ENCODE measurements at regions of chr19 and their contacts with region 1.

Region 1: DNA sequence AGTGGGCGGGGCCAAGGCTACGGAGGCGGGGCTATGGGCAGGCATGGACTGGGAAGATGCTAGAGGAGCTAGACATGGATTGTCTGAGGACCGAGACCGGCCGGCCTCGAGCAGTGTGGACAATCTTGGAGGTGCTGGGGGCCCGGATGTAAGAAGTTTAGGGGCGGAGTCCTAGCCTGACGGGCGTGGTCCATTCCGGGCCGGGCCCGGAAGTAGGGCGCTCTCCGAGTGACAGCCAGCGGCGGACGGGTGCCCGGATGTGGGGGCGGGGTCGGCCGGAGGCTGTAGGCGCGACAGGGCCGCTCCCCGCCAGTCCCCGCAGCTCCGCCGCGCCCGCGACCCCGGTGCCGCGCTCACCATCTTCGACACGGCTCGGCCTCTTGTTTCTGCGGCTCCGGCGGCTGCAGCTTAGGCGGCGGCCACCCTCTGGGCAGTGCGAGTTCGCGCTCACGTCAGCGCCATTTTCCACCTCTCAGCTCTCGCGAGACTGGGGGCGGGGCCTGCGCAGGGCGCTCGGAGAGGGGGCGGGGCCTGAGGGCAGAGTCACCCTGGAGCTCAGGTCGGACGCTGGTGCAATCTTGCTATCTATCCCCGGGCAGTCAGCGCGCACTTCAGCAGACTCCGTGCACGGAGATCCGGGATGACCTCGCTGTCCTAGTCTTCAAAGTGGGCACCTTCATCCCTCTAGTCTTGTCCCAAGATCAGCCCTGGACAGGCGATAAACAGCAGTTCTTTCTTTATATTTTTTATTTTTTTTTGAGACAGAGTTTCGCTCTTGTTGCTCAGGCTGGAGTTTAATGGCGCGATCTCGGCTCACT is at the start of gene ZNF414:
- DNase-seq: peak; percentile 94 to 98 (median 97)
- H3K4me3 ChIP-seq: peak within 1 kb of the TSS; percentile 68
- H3K4me3 Mint-ChIP-seq: peak within 1 kb of the TSS; percentile 89 to 97 (median 93)
- H3K27ac ChIP-seq: peak within 1 kb of the TSS; percentile 83
- H3K27ac Mint-ChIP-seq: peak within 1 kb of the TSS; percentile 94 to 99 (median 98)
- H3K4me1 ChIP-seq: peaks cover 64% of the 10 kb centered on the region
- H3K4me1 Mint-ChIP-seq: peaks cover 46 to 62% (median 52%) of the 10 kb centered on the region in 3 donors
- H3K27me3 ChIP-seq: no peaks in the 10 kb centered on the region
- H3K27me3 Mint-ChIP-seq: peaks cover 0 to 4% of the 10 kb centered on the region in 2 donors
- total RNA-seq, gene ZNF414: 25.7 to 26.0 TPM

Region 2: DNA sequence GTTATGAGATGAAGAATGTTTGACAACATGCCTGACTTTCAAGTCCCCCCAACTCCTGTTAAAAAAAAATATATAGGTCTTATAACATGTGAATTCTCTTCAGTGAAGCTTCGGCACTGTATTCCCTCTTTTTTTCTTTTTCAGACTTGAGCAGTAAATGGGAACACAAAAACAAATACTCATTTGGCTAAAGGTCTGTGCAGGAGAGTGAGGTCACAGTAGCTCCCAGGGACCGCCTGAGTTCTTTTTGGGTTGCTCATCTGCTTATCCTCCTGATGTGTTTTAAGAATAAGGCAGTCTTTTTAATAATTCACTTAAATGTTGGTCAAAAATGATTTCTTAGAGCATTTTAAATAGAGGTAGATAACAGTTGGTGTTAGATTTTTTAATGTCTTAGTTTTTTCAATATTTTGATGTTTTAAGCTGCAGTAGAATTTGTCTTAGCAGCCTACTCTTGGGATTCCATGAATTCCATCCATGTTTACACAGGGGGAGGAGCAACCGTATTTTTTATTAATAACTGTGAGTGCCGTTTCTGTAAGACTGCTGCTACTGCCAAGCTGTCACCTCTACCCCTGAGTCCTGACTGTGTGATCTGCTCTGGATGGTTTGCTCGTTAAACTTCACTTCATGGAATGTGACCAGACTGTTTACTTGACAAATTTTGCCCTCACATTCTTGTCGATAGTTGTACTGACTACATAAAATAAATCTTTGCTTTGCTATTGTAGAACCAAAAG is 54.2 kb before region 1 on chr19:
- CTCF ChIA-PET with region 1: no interaction called
- POLR2A ChIA-PET with region 1: no interaction called
- DNase-seq: no peak
- H3K4me3 ChIP-seq: no peak overlapping the region
- H3K4me3 Mint-ChIP-seq: peak overlapping the region in 5 of 7 donors; percentile 13 to 46 (median 40)
- H3K27ac ChIP-seq: no peak overlapping the region
- H3K27ac Mint-ChIP-seq: peak overlapping the region in 7 of 8 donors; percentile 11 to 83 (median 66)
- H3K4me1 ChIP-seq: peaks cover 37% of the 10 kb centered on the region
- H3K4me1 Mint-ChIP-seq: peaks cover 76 to 93% (median 90%) of the 10 kb centered on the region in 3 donors
- H3K27me3 ChIP-seq: no peaks in the 10 kb centered on the region
- H3K27me3 Mint-ChIP-seq: no peaks in the 10 kb centered on the region

Region 3: DNA sequence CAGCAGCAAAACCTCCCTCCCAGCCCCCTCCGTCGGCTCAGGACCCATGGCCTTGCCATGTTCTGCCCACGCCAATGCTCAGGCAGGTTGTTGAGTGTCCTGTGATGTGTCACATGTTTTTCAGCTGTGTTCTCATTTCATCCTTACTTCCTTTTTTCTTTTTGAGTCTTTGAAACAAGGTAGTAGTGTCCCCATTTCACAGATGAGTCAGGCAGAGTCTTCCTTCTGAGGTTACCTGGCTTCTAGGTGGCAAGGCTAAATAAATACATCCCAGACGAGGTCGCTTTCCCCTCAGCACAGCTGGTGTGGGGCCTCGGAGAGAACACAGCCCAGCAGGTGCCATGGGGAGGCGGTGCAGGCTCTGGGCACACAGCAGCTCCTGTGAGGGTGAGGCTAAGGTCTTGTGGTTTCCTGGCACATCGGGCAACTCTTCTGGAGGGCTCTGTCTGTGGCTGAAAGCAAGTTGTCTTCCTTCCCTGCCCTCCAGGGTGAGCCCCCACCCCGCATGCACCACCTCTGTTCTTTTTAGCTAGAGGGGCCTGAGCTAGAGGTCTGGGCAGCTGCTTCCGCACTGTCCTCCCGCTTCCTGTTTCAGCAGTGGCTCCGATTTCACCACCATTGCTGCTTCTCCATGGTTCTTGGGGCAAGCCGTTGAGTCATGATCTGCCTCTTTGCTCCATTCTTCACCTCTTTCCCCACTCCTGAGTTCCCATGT is 26.6 kb before region 1 on chr19:
- CTCF ChIA-PET with region 1: interaction called, 6 read pairs
- POLR2A ChIA-PET with region 1: interaction called, 10 read pairs
- DNase-seq: peak; percentile 35 to 71 (median 64)
- H3K4me3 ChIP-seq: no peak overlapping the region
- H3K4me3 Mint-ChIP-seq: peak overlapping the region; percentile 32 to 86 (median 66)
- H3K27ac ChIP-seq: no peak overlapping the region
- H3K27ac Mint-ChIP-seq: peak overlapping the region; percentile 78 to 97 (median 90)
- H3K4me1 ChIP-seq: peaks cover 25% of the 10 kb centered on the region
- H3K4me1 Mint-ChIP-seq: peaks cover 25 to 43% (median 35%) of the 10 kb centered on the region in 3 donors
- H3K27me3 ChIP-seq: no peaks in the 10 kb centered on the region
- H3K27me3 Mint-ChIP-seq: no peaks in the 10 kb centered on the region

Region 4: GRCh38 chr19:8569066-8569771 is 55.3 kb after region 1 on chr19:
- CTCF ChIA-PET with region 1: interaction called, 120 read pairs
- POLR2A ChIA-PET with region 1: interaction called, 15 read pairs
- DNase-seq: peak; percentile 44 to 92 (median 74)
- H3K4me3 ChIP-seq: peak overlapping the region; percentile 59
- H3K4me3 Mint-ChIP-seq: peak overlapping the region; percentile 77 to 100 (median 97)
- H3K27ac ChIP-seq: peak overlapping the region; percentile 63
- H3K27ac Mint-ChIP-seq: peak overlapping the region; percentile 74 to 99 (median 94)
- H3K4me1 ChIP-seq: peaks cover 81% of the 10 kb centered on the region
- H3K4me1 Mint-ChIP-seq: peaks cover 73 to 90% (median 78%) of the 10 kb centered on the region in 3 donors
- H3K27me3 ChIP-seq: no peaks in the 10 kb centered on the region
- H3K27me3 Mint-ChIP-seq: peaks cover 0 to 3% of the 10 kb centered on the region in 2 donors

Region 5: GRCh38 chr19:8575467-8575997 is 61.6 kb after region 1 on chr19:
- CTCF ChIA-PET with region 1: interaction called, 120 read pairs
- POLR2A ChIA-PET with region 1: interaction called, 15 read pairs
- DNase-seq: peak; percentile 48 to 78 (median 55)
- H3K4me3 ChIP-seq: peak overlapping the region; percentile 91
- H3K4me3 Mint-ChIP-seq: peak overlapping the region; percentile 93 to 100 (median 97)
- H3K27ac ChIP-seq: peak overlapping the region; percentile 59
- H3K27ac Mint-ChIP-seq: peak overlapping the region; percentile 87 to 99 (median 94)
- H3K4me1 ChIP-seq: peaks cover 88% of the 10 kb centered on the region
- H3K4me1 Mint-ChIP-seq: peaks cover 61 to 92% (median 63%) of the 10 kb centered on the region in 3 donors
- H3K27me3 ChIP-seq: no peaks in the 10 kb centered on the region
- H3K27me3 Mint-ChIP-seq: peaks cover 0 to 3% of the 10 kb centered on the region in 2 donors

Measured in CD8-positive, alpha-beta memory T cell (primary cell).